ENCODE measurements at regions of chr7 and their contacts with region 1.

Region 1: GRCh38 chr7:130010689-130011412 is 40.3 kb downstream of the ZC3HC1 start:
- DNase-seq: peak; percentile 88 to 90
- H3K4me3 ChIP-seq: no peak overlapping the region
- H3K27ac ChIP-seq: peak overlapping the region in 1 of 3 donors; percentile 83
- H3K4me1 ChIP-seq: peaks cover 8 to 27% of the 10 kb centered on the region in 2 donors
- H3K27me3 ChIP-seq: no peaks in the 10 kb centered on the region
- CTCF ChIP-seq: peak; percentile 78 to 98 (median 93)
- POLR2A ChIP-seq: no peak

Region 2: GRCh38 chr7:129664029-129665012 is 346.5 kb before region 1 on chr7:
- intact Hi-C with region 1: loop called (anchors 5 kb)
- DNase-seq: no peak
- H3K4me3 ChIP-seq: no peak overlapping the region
- H3K27ac ChIP-seq: no peak overlapping the region
- H3K4me1 ChIP-seq: peaks cover 6 to 8% of the 10 kb centered on the region in 2 donors
- H3K27me3 ChIP-seq: no peaks in the 10 kb centered on the region
- CTCF ChIP-seq: peak in 4 of 6 experiments; percentile 31 to 62 (median 43)
- POLR2A ChIP-seq: no peak

Region 3: GRCh38 chr7:129825496-129826267 is 185.2 kb before region 1 on chr7:
- intact Hi-C with region 1: loop called (anchors 5 kb)
- DNase-seq: peak; percentile 90
- H3K4me3 ChIP-seq: peak overlapping the region in 2 of 3 donors; percentile 16 to 75
- H3K27ac ChIP-seq: peak overlapping the region; percentile 34 to 67 (median 49)
- H3K4me1 ChIP-seq: peaks cover 22 to 27% of the 10 kb centered on the region in 2 donors
- H3K27me3 ChIP-seq: no peaks in the 10 kb centered on the region
- CTCF ChIP-seq: peak; percentile 47 to 100 (median 75)
- POLR2A ChIP-seq: no peak

Region 4: GRCh38 chr7:130242198-130243014 is 231.6 kb after region 1 on chr7:
- intact Hi-C with region 1: no loop called
- DNase-seq: peak; percentile 40 to 42
- H3K4me3 ChIP-seq: no peak overlapping the region
- H3K27ac ChIP-seq: no peak overlapping the region
- H3K4me1 ChIP-seq: no peaks in the 10 kb centered on the region
- H3K27me3 ChIP-seq: no peaks in the 10 kb centered on the region
- CTCF ChIP-seq: peak in 5 of 6 experiments; percentile 45 to 65 (median 57)
- POLR2A ChIP-seq: no peak

Measured in thyroid gland (tissue), 4 donors.